Mammary epithelial cell (primary cell): ENCODE measurements at regions of chr11 and their contacts with region 1.

Region 1: GRCh38 chr11:70183483-70184169 is 19.5 kb upstream of the FADD start:
- DNase-seq: no peak
- H3K4me3 ChIP-seq: no peak overlapping the region
- H3K27ac ChIP-seq: no peak overlapping the region
- H3K4me1 ChIP-seq: no peaks in the 10 kb centered on the region
- H3K27me3 ChIP-seq: no peaks in the 10 kb centered on the region
- CTCF ChIP-seq: no peak

Region 2: GRCh38 chr11:69711822-69712801 is 471.5 kb before region 1 on chr11:
- CTCF ChIA-PET with region 1: no interaction called
- dilution Hi-C with region 1: loop called (anchors 5 kb)
- in situ Hi-C with region 1: no loop called
- intact Hi-C with region 1: no loop called
- DNase-seq: no peak
- H3K4me3 ChIP-seq: no peak overlapping the region
- H3K27ac ChIP-seq: no peak overlapping the region
- H3K4me1 ChIP-seq: peaks cover 6% of the 10 kb centered on the region
- H3K27me3 ChIP-seq: no peaks in the 10 kb centered on the region
- CTCF ChIP-seq: no peak

Region 3: DNA sequence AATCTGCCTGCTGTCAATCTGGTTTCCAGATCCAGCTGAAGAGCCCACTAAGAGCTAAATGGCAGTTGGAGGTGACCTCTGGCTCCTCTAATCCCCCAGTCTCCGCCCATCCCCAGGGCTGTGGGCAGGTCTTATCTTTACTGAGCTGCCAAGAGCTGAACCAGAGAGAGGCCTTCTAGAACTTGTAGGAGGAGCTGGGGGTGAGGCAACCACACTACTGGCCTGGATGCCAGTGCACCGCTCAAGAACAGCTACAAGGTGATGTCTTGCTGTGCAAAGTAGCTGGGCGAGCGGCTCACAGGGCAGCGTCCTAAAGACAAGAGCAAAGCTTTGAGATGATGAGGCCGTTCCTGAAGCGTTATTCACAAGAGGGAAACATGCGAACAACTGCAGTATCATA is 589.3 kb after region 1 on chr11:
- CTCF ChIA-PET with region 1: no interaction called
- dilution Hi-C with region 1: no loop called
- in situ Hi-C with region 1: no loop called
- intact Hi-C with region 1: no loop called
- DNase-seq: no peak
- H3K4me3 ChIP-seq: no peak overlapping the region
- H3K27ac ChIP-seq: no peak overlapping the region
- H3K4me1 ChIP-seq: no peaks in the 10 kb centered on the region
- H3K27me3 ChIP-seq: no peaks in the 10 kb centered on the region
- CTCF ChIP-seq: no peak